AG04449 (cell line): ENCODE measurements at regions of chr10 and their contacts with region 1.

Region 1: GRCh38 chr10:80046629-80047441 is 31.6 kb upstream of the TMEM254 start:
- DNase-seq: peak; percentile 10
- H3K4me3 ChIP-seq: no peak overlapping the region
- CTCF ChIP-seq: peak; percentile 88

Region 2: GRCh38 chr10:79542626-79543025 is 504.2 kb before region 1 on chr10:
- CTCF ChIA-PET with region 1: interaction called, 12 read pairs
- POLR2A ChIA-PET with region 1: no interaction called
- DNase-seq: no peak
- H3K4me3 ChIP-seq: no peak overlapping the region
- CTCF ChIP-seq: no peak

Region 3: GRCh38 chr10:80025281-80025680 is 21.6 kb before region 1 on chr10:
- CTCF ChIA-PET with region 1: interaction called, 20 read pairs
- POLR2A ChIA-PET with region 1: no interaction called
- DNase-seq: no peak
- H3K4me3 ChIP-seq: no peak overlapping the region
- CTCF ChIP-seq: no peak

Region 4: GRCh38 chr10:80070057-80070456 is 23.2 kb after region 1 on chr10:
- CTCF ChIA-PET with region 1: interaction called, 51 read pairs
- POLR2A ChIA-PET with region 1: no interaction called
- DNase-seq: no peak
- H3K4me3 ChIP-seq: no peak overlapping the region
- CTCF ChIP-seq: no peak

Region 5: GRCh38 chr10:80078448-80079311 is 31.8 kb after region 1 on chr10 and contains the start of gene TMEM254:
- CTCF ChIA-PET with region 1: interaction called, 20 read pairs
- POLR2A ChIA-PET with region 1: no interaction called
- DNase-seq: peak; percentile 17
- H3K4me3 ChIP-seq: peak within 1 kb of the TSS; percentile 62
- CTCF ChIP-seq: no peak

Region 6: DNA sequence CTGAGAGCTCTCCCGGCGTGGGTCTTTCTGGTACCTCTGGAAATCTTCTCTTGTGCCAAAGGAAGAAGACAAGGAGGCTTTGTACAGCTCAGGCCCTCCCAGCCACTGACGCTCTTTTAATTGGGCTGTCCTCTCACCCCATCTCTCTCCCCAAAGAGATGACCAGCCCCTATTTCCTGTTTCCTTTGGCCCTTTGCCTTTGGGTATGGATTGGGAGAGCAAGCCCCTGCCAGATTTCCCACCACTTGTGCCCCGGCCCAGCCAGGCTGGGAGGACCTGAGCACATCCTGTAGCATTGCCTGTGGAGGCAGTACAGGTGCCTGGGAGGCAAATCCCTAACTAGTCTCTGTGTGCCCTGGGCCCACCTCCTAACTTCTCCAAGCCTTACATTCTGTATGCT is 80.0 kb after region 1 on chr10:
- CTCF ChIA-PET with region 1: no interaction called
- POLR2A ChIA-PET with region 1: no interaction called
- DNase-seq: no peak
- H3K4me3 ChIP-seq: no peak overlapping the region
- CTCF ChIP-seq: no peak